ENCODE measurements at regions of chr20 and their contacts with region 1.

Region 1: DNA sequence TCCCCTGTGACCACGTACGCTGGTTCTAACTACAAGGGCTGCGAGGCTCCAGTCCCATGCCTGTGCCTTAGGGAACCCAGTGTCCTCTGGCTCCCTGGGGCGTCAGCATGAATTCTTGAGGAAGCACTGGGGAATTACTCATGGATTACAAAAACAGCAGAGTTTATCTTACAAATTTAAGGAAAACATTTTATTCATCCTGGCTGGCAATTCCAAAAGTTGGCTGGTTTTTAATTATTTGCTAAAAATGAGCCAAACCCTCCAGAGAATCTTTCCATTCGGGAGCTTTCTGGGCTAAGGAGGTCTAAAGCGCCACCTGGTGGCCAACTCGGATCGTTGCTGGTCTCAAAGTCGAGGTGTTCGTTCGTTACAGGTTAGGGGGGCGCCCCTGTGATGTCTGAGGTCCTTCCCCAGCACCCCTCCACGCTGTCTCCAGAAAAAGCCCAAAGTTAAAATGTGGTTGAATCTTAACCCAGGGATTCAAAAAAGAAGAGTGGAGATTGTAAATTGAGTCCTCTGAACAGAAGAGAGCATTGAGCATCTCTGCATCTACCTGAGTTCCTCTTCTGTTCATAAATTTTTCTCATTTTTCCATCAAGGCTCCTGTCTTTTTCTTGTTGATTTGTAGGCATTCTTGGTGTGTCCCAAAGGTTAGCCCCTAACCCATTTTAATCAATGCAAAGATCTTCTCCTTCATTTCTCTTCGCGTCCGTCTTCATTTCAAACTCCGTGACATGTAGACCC is 99.4 kb downstream of the BFSP1 start:
- DNase-seq: peak; percentile 23
- H3K4me3 ChIP-seq: no peak overlapping the region
- H3K27ac ChIP-seq: no peak overlapping the region
- H3K4me1 ChIP-seq: peaks cover 4% of the 10 kb centered on the region
- H3K27me3 ChIP-seq: no peaks in the 10 kb centered on the region
- CTCF ChIP-seq: peak; percentile 79 to 87

Region 2: DNA sequence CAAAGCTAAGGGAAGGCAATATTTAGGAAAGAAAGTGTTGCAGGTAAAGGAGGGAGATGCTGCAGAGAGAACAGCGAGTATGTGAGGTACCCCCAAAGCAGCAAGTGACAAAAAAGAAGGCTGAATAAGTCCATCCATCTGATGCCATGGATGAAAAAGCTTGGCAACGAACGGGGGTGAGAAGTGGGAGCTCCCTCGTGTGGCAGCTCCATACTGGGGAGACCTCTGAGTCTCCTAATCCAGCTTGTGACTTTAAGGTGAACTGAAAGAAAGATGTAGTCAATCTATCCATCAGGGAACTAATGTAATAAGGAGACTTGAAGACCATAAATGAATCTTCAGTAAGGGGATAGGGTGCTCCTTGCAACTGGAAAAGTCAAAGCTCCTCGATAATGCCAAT is 527.0 kb before region 1 on chr20:
- CTCF ChIA-PET with region 1: interaction called, 12 read pairs
- dilution Hi-C with region 1: no loop called
- in situ Hi-C with region 1: no loop called
- intact Hi-C with region 1: no loop called
- DNase-seq: no peak
- H3K4me3 ChIP-seq: no peak overlapping the region
- H3K27ac ChIP-seq: no peak overlapping the region
- H3K4me1 ChIP-seq: no peaks in the 10 kb centered on the region
- H3K27me3 ChIP-seq: no peaks in the 10 kb centered on the region
- CTCF ChIP-seq: no peak

Region 3: GRCh38 chr20:17471606-17472187 is 39.9 kb after region 1 on chr20:
- CTCF ChIA-PET with region 1: no interaction called
- dilution Hi-C with region 1: no loop called
- in situ Hi-C with region 1: no loop called
- intact Hi-C with region 1: no loop called
- DNase-seq: no peak
- H3K4me3 ChIP-seq: no peak overlapping the region
- H3K27ac ChIP-seq: no peak overlapping the region
- H3K4me1 ChIP-seq: no peaks in the 10 kb centered on the region
- H3K27me3 ChIP-seq: no peaks in the 10 kb centered on the region
- CTCF ChIP-seq: no peak

Measured in mammary epithelial cell (primary cell).